ENCODE measurements at regions of chr12 and their contacts with region 1.

Region 1: DNA sequence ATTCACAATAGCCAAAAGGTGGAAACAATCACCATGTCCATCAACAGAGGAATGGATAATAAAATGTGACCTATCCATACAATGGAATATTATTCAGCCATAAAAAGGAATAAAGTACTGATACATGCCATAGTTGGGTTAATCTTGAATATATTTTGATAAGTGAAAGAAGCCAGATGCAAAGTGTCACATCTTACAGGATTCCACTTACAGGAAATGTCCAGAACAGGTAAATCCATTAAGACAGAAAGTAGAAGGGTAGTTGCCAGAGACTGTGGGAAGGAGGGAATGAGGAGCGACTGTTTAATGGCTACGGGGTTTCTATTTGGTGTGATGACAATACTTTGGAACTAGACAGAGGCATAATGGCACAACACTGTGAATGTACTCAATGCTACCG is 171.6 kb downstream of the KSR2 start:
- DNase-seq: no peak
- ATAC-seq: no peak
- H3K4me3 ChIP-seq: no peak overlapping the region
- H3K4me3 Mint-ChIP-seq: no peak overlapping the region
- H3K27ac ChIP-seq: no peak overlapping the region
- H3K27ac Mint-ChIP-seq: no peak overlapping the region
- H3K4me1 ChIP-seq: no peaks in the 10 kb centered on the region
- H3K4me1 Mint-ChIP-seq: no peaks in the 10 kb centered on the region
- H3K27me3 ChIP-seq: no peaks in the 10 kb centered on the region
- H3K27me3 Mint-ChIP-seq: peaks cover 0 to 10% (median 6%) of the 10 kb centered on the region in 5 donors

Region 2: DNA sequence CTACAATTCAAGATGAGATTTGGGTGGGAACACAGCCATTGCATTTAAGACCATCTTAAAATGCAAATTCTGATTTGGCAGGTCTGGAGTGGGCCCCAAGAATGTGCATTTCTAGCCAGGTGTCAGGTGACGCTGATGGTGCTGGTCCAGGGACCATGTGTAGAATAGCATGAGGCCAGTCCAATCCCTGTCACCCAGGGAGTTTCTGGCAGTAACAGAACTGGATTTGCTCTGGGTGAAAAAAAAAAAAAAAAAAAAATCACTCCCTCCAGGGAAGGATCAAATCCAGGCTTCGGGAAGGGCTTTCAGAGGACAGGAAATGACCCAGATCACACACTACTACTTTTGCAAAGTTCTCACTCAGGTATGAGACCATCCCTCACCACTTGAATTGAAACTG is 222.5 kb before region 1 on chr12:
- CTCF ChIA-PET with region 1: no interaction called
- POLR2A ChIA-PET with region 1: no interaction called
- intact Hi-C with region 1: loop called in 1 of 2 experiments (anchors 5 kb)
- DNase-seq: no peak
- ATAC-seq: no peak
- H3K4me3 ChIP-seq: no peak overlapping the region
- H3K4me3 Mint-ChIP-seq: no peak overlapping the region
- H3K27ac ChIP-seq: no peak overlapping the region
- H3K27ac Mint-ChIP-seq: no peak overlapping the region
- H3K4me1 ChIP-seq: no peaks in the 10 kb centered on the region
- H3K4me1 Mint-ChIP-seq: no peaks in the 10 kb centered on the region
- H3K27me3 ChIP-seq: no peaks in the 10 kb centered on the region
- H3K27me3 Mint-ChIP-seq: peaks cover 0 to 14% (median 8%) of the 10 kb centered on the region in 5 donors

Region 3: GRCh38 chr12:117718559-117718958 is 78.6 kb before region 1 on chr12:
- CTCF ChIA-PET with region 1: no interaction called
- POLR2A ChIA-PET with region 1: no interaction called
- intact Hi-C with region 1: no loop called
- DNase-seq: no peak
- ATAC-seq: no peak
- H3K4me3 ChIP-seq: no peak overlapping the region
- H3K4me3 Mint-ChIP-seq: no peak overlapping the region
- H3K27ac ChIP-seq: no peak overlapping the region
- H3K27ac Mint-ChIP-seq: no peak overlapping the region
- H3K4me1 ChIP-seq: no peaks in the 10 kb centered on the region
- H3K4me1 Mint-ChIP-seq: no peaks in the 10 kb centered on the region
- H3K27me3 ChIP-seq: no peaks in the 10 kb centered on the region
- H3K27me3 Mint-ChIP-seq: peaks cover 0 to 5% (median 4%) of the 10 kb centered on the region in 5 donors

Region 4: DNA sequence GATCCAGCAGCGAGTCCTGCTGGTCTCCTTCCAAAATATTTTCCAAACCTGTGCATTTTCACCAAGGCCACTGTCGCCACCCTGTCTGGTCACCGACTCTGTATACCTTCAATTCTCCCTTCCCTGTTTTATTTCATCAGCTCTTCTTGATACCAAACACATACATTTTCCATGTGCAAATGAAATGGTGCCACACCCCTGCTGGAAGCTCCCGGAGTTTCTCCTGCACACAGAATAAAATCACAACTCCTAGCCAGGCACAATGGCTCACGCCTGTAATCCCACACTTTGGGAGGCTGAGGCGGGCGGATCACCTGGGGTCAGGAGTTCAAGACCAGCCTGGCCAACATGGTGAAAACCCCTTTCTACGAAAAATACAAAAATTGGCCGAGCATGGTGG is 292.6 kb after region 1 on chr12:
- CTCF ChIA-PET with region 1: no interaction called
- POLR2A ChIA-PET with region 1: no interaction called
- intact Hi-C with region 1: no loop called
- DNase-seq: no peak
- ATAC-seq: no peak
- H3K4me3 ChIP-seq: no peak overlapping the region
- H3K4me3 Mint-ChIP-seq: no peak overlapping the region
- H3K27ac ChIP-seq: no peak overlapping the region
- H3K27ac Mint-ChIP-seq: no peak overlapping the region
- H3K4me1 ChIP-seq: no peaks in the 10 kb centered on the region
- H3K4me1 Mint-ChIP-seq: no peaks in the 10 kb centered on the region
- H3K27me3 ChIP-seq: no peaks in the 10 kb centered on the region
- H3K27me3 Mint-ChIP-seq: no peaks in the 10 kb centered on the region

Measured in naive thymus-derived CD4-positive, alpha-beta T cell (primary cell).